Heart left ventricle (tissue), 16 donors: ENCODE measurements at regions of chr5 and their contacts with region 1.

Region 1: GRCh38 chr5:14664302-14665100 is at the start of gene OTULIN:
- DNase-seq: peak; percentile 92 to 97 (median 94)
- ATAC-seq: peak; percentile 93 to 98 (median 96)
- H3K4me3 ChIP-seq: peak within 1 kb of the TSS; percentile 46 to 88 (median 74)
- H3K27ac ChIP-seq: peak within 1 kb of the TSS; percentile 80 to 98 (median 91)
- H3K4me1 ChIP-seq: peaks cover 0 to 53% (median 40%) of the 10 kb centered on the region in 12 donors
- H3K27me3 ChIP-seq: no peaks in the 10 kb centered on the region
- CTCF ChIP-seq: no peak
- POLR2A ChIP-seq: peak; percentile 9 to 93
- total RNA-seq, gene OTULIN: 19.3 to 42.0 (median 27.5) TPM

Region 2: DNA sequence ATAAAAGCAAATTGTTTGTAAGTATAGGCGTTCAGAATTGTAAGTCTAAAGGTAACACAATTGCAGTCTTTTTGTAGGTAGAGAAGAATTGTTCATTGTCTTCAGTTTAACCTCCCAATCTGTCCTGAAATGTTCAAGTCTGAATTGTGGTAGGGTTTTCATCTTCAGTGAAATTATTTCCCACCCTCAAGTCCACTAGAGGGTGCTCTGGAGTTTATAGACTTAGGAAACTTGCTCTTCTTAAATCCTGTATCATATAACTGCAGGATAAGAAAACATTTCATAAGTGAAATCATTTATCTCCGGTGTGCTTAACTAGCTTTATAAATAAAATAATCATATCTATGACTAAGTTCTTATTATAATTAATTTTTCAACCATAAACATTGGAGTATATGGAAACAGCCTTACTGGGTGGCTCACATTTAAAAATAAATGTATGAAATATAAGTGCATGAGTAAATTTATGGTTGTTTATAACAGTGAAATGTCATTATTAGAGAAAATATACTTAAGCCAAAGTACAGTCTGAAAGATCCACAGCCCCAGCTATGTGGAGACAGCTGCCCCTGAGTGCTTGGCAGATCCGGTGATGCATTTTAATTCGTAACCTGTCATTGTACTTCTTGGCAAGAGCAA is 265.3 kb before region 1 on chr5:
- intact Hi-C with region 1: loop called in 1 of 10 experiments (anchors 5 kb)
- DNase-seq: no peak
- ATAC-seq: peak in 2 of 4 donors; percentile 50
- H3K4me3 ChIP-seq: no peak overlapping the region
- H3K27ac ChIP-seq: peak overlapping the region in 2 of 12 donors; percentile 11 to 28
- H3K4me1 ChIP-seq: peaks cover 0 to 29% (median 8%) of the 10 kb centered on the region in 12 donors
- H3K27me3 ChIP-seq: no peaks in the 10 kb centered on the region
- CTCF ChIP-seq: peak; percentile 52 to 85 (median 75)
- POLR2A ChIP-seq: no peak

Region 3: GRCh38 chr5:14489642-14490041 is 174.9 kb before region 1 on chr5:
- intact Hi-C with region 1: loop called in 1 of 10 experiments (anchors 10 kb)
- DNase-seq: no peak
- ATAC-seq: no peak
- H3K4me3 ChIP-seq: no peak overlapping the region
- H3K27ac ChIP-seq: peak overlapping the region in 1 of 12 donors; percentile 70
- H3K4me1 ChIP-seq: peaks cover 0 to 36% (median 10%) of the 10 kb centered on the region in 12 donors
- H3K27me3 ChIP-seq: no peaks in the 10 kb centered on the region
- CTCF ChIP-seq: no peak
- POLR2A ChIP-seq: no peak